Naive thymus-derived CD8-positive, alpha-beta T cell (primary cell): ENCODE measurements at regions of chr19 and their contacts with region 1.

Region 1: GRCh38 chr19:40716655-40717324 is at the starts of genes COQ8B and ITPKC:
- DNase-seq: peak; percentile 99 to 100 (median 99)
- ATAC-seq: peak; percentile 58 to 72
- H3K4me3 Mint-ChIP-seq: peak within 1 kb of the TSS; percentile 80 to 98 (median 92)
- H3K27ac Mint-ChIP-seq: peak within 1 kb of the TSS; percentile 90 to 100 (median 98)
- H3K4me1 Mint-ChIP-seq: peaks cover 32 to 74% (median 70%) of the 10 kb centered on the region in 4 donors
- H3K27me3 Mint-ChIP-seq: no peaks in the 10 kb centered on the region
- polyA plus RNA-seq, gene COQ8B: 9.8 to 14.8 (median 13.3) TPM
- polyA plus RNA-seq, gene ITPKC: 2.9 to 5.7 (median 4.0) TPM

Region 2: DNA sequence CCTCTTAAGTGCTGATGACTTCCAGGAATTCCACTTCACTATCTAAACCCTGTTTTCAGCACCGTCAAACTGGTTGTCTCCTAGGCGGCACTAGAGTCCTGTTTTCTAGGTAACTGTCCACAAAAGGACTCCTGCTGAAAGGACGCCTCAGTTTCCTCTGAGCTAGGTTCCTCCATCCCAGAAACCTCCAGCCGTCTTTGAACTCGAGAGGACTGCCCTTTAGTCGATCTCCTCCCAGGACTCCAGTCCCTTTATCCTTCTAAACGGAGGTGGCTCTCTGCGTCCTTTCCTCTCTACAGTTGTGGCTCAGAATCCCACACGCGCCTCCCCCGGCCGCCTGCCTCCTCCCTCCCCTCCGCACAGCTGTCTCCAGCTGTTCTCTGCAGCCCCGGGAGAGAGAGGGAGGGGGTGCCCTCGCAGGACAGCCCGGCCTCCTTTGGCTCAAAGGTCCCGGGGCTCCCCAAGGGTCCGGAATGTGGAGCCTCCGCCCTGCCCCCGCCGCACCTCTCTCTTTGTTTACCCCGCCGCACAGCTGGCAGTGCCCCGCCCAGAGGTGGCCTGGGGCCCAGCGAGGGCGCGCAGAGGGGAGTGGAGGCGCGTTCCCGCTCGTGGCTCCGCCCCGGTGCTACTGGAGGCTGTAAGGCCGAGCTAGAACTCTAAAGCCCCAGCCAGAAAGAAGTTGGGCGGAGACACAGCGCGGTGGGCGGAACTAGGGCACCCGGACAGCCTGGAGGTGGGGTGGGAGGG is 113.2 kb before region 1 on chr19:
- POLR2A ChIA-PET with region 1: no interaction called
- DNase-seq: peak; percentile 84 to 96 (median 93)
- ATAC-seq: peak; percentile 71 to 73
- H3K4me3 Mint-ChIP-seq: peak overlapping the region; percentile 78 to 94 (median 90)
- H3K27ac Mint-ChIP-seq: peak overlapping the region in 8 of 10 donors; percentile 72 to 95 (median 88)
- H3K4me1 Mint-ChIP-seq: peaks cover 30 to 85% (median 73%) of the 10 kb centered on the region in 4 donors
- H3K27me3 Mint-ChIP-seq: peaks cover 9 to 35% (median 18%) of the 10 kb centered on the region in 5 donors

Region 3: GRCh38 chr19:40750059-40750873 is 33.5 kb after region 1 on chr19 and contains the start of gene ACTMAP:
- POLR2A ChIA-PET with region 1: interaction called, 23 read pairs
- DNase-seq: peak in 9 of 10 donors; percentile 94 to 100 (median 100)
- ATAC-seq: peak; percentile 87 to 90
- H3K4me3 Mint-ChIP-seq: peak within 1 kb of the TSS; percentile 91 to 100 (median 99)
- H3K27ac Mint-ChIP-seq: peak within 1 kb of the TSS; percentile 88 to 99 (median 99)
- H3K4me1 Mint-ChIP-seq: peaks cover 28 to 52% (median 47%) of the 10 kb centered on the region in 4 donors
- H3K27me3 Mint-ChIP-seq: no peaks in the 10 kb centered on the region
- polyA plus RNA-seq, gene ACTMAP: 2.5 to 4.6 (median 3.4) TPM